ENCODE measurements at regions of chr6 and their contacts with region 1.

Region 1: DNA sequence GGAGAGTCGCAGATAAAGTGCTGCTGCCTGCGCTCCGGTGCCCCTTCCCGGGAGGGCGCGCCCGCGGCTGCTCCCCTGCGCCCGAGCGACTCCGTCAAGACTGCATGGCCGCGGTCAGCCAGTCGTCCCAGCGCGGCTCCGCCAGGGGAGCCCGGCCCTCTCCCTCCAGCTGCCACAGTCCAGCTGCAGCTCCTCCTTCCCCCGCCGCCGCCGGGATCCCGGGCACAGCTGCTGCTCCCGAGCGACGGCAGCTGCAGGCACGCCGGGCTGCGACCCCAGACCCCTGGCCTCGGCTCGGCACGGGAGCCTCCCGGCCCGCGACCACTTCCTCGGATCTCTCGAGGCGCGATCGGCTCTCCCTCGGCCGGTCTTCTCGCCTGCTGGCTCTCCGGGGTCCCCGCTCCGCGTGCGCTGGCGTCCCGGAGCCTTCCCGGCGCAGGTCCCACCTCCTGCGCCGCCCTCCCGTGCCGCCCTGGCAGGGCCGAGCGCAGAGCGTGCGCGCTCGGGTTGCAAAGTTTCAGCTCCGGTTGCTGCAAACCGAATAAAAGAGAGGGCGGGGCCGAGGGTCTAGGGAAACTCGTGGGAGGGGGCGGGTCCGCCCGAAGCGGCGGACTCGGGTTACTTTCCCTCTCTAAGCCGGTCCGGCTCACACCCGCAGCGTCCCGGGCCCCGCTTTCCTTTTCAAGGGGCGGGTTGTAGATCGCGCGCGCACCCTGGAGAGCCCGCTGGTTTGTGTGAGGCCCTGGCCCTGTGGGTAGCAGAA is at the start of gene CNKSR3:
- DNase-seq: peak; percentile 55
- ATAC-seq: peak; percentile 92
- H3K4me3 ChIP-seq: peak within 1 kb of the TSS; percentile 63 to 87
- H3K27ac ChIP-seq: peak within 1 kb of the TSS; percentile 71
- H3K4me1 ChIP-seq: peaks cover 25% of the 10 kb centered on the region
- H3K27me3 ChIP-seq: no peaks in the 10 kb centered on the region
- CTCF ChIP-seq: no peak
- total RNA-seq, gene CNKSR3: 18.2 TPM

Region 2: GRCh38 chr6:154537511-154538325 is 27.4 kb after region 1 on chr6:
- CTCF ChIA-PET with region 1: no interaction called
- POLR2A ChIA-PET with region 1: interaction called, 8 read pairs
- in situ Hi-C with region 1: no loop called
- intact Hi-C with region 1: loop called (anchors 2 kb)
- DNase-seq: no peak
- ATAC-seq: no peak
- H3K4me3 ChIP-seq: no peak overlapping the region
- H3K27ac ChIP-seq: no peak overlapping the region
- H3K4me1 ChIP-seq: no peaks in the 10 kb centered on the region
- H3K27me3 ChIP-seq: no peaks in the 10 kb centered on the region
- CTCF ChIP-seq: no peak

Region 3: DNA sequence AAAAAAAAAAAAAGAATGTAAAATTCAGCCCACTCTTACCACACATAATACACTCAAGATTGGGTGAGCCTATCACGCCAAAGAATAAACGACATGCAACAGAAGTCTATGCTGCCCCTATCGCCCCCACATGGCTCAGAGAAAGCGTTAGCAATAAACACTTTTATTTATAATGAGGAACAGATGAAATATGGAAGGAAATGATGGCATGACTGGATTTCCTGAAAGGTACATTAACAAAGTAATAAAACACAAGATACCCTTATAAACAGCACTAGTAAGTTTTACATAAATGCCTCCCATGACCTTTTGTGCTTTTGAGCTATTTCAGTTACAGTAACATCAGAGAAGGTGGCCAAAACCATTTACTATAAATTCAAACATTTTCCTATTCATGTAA is 151.4 kb after region 1 on chr6:
- CTCF ChIA-PET with region 1: no interaction called
- POLR2A ChIA-PET with region 1: no interaction called
- in situ Hi-C with region 1: no loop called
- intact Hi-C with region 1: loop called (anchors 10 kb)
- DNase-seq: no peak
- ATAC-seq: no peak
- H3K4me3 ChIP-seq: no peak overlapping the region
- H3K27ac ChIP-seq: no peak overlapping the region
- H3K4me1 ChIP-seq: no peaks in the 10 kb centered on the region
- H3K27me3 ChIP-seq: no peaks in the 10 kb centered on the region; the same call in 1 of the 2 replicates
- CTCF ChIP-seq: no peak

Measured in Panc1 (cell line).